Left colon (tissue), 2 donors: ENCODE measurements at regions of chr3 and their contacts with region 1.

Region 1: GRCh38 chr3:66407611-66408218 is 93.1 kb downstream of the LRIG1 start:
- DNase-seq: peak; percentile 61 to 79
- ATAC-seq: peak; percentile 87

Region 2: GRCh38 chr3:66816090-66816761 is 408.5 kb after region 1 on chr3:
- intact Hi-C with region 1: loop called in 1 of 2 experiments (anchors 2 kb)
- DNase-seq: no peak
- ATAC-seq: peak; percentile 76

Region 3: GRCh38 chr3:67228141-67228540 is 820.4 kb after region 1 on chr3:
- intact Hi-C with region 1: no loop called
- DNase-seq: no peak
- ATAC-seq: no peak